H1 (cell line): ENCODE measurements at regions of chr19 and their contacts with region 1.

Region 1: GRCh38 chr19:53879140-53880081 is 2.6 kb upstream of the PRKCG start:
- DNase-seq: peak; percentile 92 to 100
- H3K4me3 ChIP-seq: peak overlapping the region; percentile 44 to 64 (median 60)
- H3K27ac ChIP-seq: peak overlapping the region; percentile 69
- H3K4me1 ChIP-seq: peaks cover 3 to 25% (median 8%) of the 10 kb centered on the region in 4 experiments
- H3K27me3 ChIP-seq: peaks cover 0 to 11% (median 3%) of the 10 kb centered on the region in 4 experiments; a peak in 4 of 7 replicates
- CTCF ChIP-seq: no peak
- EP300 ChIP-seq: no peak; a peak in 1 of 3 replicates
- POLR2A ChIP-seq: peak in 1 of 2 experiments; percentile 74; a peak in 2 of 3 replicates
- RAD21 ChIP-seq: no peak

Region 2: DNA sequence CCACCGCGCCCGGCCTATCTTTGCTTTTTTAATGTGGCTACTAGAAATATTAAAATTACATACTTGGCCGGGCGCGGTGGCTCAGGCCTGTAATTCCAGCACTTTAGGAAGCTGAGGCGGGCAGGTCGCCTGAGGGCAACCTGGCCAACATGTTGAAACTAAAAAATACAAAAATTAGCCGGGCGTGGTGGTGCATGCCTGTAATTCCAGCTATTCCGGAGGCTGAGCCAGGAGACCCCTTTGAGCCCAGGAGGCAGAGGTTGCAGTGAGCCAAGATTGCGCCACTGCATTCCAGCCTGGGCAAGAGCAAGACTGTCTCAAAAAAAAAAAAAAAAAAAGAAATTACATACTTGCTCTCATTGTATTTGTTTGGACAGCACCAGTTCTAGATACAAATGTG is 282.4 kb before region 1 on chr19:
- CTCF ChIA-PET with region 1: no interaction called
- POLR2A ChIA-PET with region 1: no interaction called
- DNase-seq: no peak
- H3K4me3 ChIP-seq: no peak overlapping the region
- H3K27ac ChIP-seq: peak overlapping the region; percentile 47; the same call in 1 of the 2 replicates
- H3K4me1 ChIP-seq: peaks cover 4 to 28% (median 20%) of the 10 kb centered on the region in 4 experiments
- H3K27me3 ChIP-seq: no peaks in the 10 kb centered on the region
- CTCF ChIP-seq: no peak
- EP300 ChIP-seq: no peak
- POLR2A ChIP-seq: no peak
- RAD21 ChIP-seq: no peak

Region 3: GRCh38 chr19:53707277-53707676 is 172.1 kb before region 1 on chr19:
- CTCF ChIA-PET with region 1: no interaction called
- POLR2A ChIA-PET with region 1: no interaction called
- DNase-seq: no peak
- H3K4me3 ChIP-seq: no peak overlapping the region
- H3K27ac ChIP-seq: no peak overlapping the region
- H3K4me1 ChIP-seq: peaks cover 0 to 1% (median 0%) of the 10 kb centered on the region in 4 experiments; a peak in 2 of 7 replicates
- H3K27me3 ChIP-seq: no peaks in the 10 kb centered on the region
- CTCF ChIP-seq: peak in 1 of 3 experiments; percentile 32; a peak in 1 of 4 replicates
- EP300 ChIP-seq: no peak
- POLR2A ChIP-seq: no peak
- RAD21 ChIP-seq: peak in 1 of 2 experiments; percentile 15; a peak in 1 of 4 replicates

Region 4: DNA sequence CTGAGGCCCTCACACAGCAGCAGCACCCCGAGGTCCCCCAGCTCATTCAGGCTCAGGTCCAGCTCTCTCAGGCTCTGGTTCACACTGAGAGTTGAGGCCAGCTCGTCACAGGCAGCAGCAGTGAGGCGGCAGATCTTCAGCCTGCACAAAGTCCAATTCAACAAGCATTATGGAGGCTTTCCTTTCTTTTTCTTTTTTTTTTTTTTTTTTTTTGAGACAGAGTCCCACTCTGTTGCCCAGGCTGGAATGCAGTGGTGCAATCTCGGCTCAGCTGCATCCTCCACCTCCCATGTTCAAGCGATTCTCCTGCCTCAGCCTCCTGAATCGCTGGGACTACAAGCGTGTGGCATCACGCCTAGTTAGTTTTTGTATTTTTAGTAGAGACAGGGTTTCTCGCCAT is 78.2 kb before region 1 on chr19:
- CTCF ChIA-PET with region 1: no interaction called
- POLR2A ChIA-PET with region 1: no interaction called
- DNase-seq: no peak
- H3K4me3 ChIP-seq: no peak overlapping the region
- H3K27ac ChIP-seq: no peak overlapping the region
- H3K4me1 ChIP-seq: no peaks in the 10 kb centered on the region
- H3K27me3 ChIP-seq: no peaks in the 10 kb centered on the region; a peak in 1 of 7 replicates
- CTCF ChIP-seq: no peak
- EP300 ChIP-seq: no peak
- POLR2A ChIP-seq: no peak
- RAD21 ChIP-seq: no peak

Region 5: DNA sequence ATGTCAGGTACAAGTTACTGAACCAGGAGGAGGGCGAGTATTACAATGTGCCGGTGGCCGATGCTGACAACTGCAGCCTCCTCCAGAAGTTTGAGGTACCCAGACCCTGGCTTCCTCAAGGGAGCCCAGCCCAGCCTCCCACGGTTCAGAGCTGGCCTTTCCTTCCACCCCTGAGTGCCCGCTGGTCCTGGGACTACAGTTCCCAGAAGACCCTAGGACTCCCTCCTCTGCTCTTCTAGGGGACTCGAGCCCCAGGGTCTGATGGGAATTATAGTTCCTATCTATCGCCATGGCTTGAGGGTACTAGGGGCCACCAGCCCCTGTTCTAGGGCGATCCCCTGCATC is 13.5 kb after region 1 on chr19:
- CTCF ChIA-PET with region 1: interaction called, 18 read pairs
- POLR2A ChIA-PET with region 1: interaction called, 15 read pairs
- DNase-seq: no peak
- H3K4me3 ChIP-seq: no peak overlapping the region
- H3K27ac ChIP-seq: no peak overlapping the region
- H3K4me1 ChIP-seq: peaks cover 0 to 10% (median 5%) of the 10 kb centered on the region in 4 experiments; a peak in 5 of 7 replicates
- H3K27me3 ChIP-seq: peaks cover 0 to 3% (median 0%) of the 10 kb centered on the region in 4 experiments; a peak in 1 of 7 replicates
- CTCF ChIP-seq: no peak
- EP300 ChIP-seq: no peak
- POLR2A ChIP-seq: no peak
- RAD21 ChIP-seq: no peak

Region 6: DNA sequence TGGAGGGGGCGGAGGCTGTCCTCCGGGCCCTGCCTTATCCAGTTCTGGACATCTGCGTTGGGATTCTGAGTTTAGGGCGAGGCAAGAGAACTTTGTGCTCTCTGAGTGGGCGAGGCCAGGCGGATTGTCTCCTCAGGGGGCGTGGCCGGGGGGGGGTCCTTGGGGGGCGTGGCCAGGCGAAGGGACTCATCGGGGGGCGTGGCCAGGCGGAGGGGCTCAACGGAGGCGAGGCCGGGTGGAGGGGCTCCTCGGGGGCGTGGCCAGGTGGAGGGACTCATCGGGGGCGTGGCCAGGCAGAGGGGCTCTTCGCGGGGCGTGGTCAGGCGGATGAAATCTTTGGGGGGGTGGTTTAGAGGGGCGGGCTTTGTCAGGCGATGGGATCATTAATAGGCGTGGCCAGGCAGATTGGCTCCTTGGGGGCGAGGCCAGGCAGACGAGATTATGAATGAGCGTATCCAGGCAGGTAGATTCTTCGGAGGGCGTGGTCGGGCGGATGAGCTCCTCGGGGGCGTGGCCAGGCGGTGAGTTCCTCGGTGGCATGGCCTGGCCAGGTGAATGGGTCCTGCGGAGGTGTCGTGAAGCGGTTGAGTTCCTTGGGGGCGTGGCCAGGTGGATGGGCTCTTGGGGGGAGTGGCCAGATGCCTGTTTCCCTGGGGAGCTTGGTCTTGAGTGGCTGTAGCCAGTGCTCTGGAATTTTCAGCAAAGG is 19.4 kb after region 1 on chr19:
- CTCF ChIA-PET with region 1: interaction called, 18 read pairs
- POLR2A ChIA-PET with region 1: interaction called, 10 read pairs
- DNase-seq: peak; percentile 99
- H3K4me3 ChIP-seq: peak overlapping the region; percentile 28 to 68 (median 56); a peak in 7 of 8 replicates
- H3K27ac ChIP-seq: no peak overlapping the region
- H3K4me1 ChIP-seq: peaks cover 0 to 14% (median 9%) of the 10 kb centered on the region in 4 experiments; a peak in 4 of 7 replicates
- H3K27me3 ChIP-seq: peaks cover 0 to 3% (median 0%) of the 10 kb centered on the region in 4 experiments; a peak in 1 of 7 replicates
- CTCF ChIP-seq: no peak
- EP300 ChIP-seq: no peak
- POLR2A ChIP-seq: no peak
- RAD21 ChIP-seq: no peak